Adrenal gland (tissue), 19 donors: ENCODE measurements at regions of chr14 and their contacts with region 1.

Region 1: GRCh38 chr14:53055003-53055402 is 98.1 kb downstream of the DDHD1 start:
- DNase-seq: no peak
- H3K4me3 ChIP-seq: no peak overlapping the region
- H3K27ac ChIP-seq: no peak overlapping the region
- H3K4me1 ChIP-seq: no peaks in the 10 kb centered on the region
- H3K27me3 ChIP-seq: no peaks in the 10 kb centered on the region
- CTCF ChIP-seq: peak; percentile 45 to 80 (median 68)
- POLR2A ChIP-seq: no peak

Region 2: DNA sequence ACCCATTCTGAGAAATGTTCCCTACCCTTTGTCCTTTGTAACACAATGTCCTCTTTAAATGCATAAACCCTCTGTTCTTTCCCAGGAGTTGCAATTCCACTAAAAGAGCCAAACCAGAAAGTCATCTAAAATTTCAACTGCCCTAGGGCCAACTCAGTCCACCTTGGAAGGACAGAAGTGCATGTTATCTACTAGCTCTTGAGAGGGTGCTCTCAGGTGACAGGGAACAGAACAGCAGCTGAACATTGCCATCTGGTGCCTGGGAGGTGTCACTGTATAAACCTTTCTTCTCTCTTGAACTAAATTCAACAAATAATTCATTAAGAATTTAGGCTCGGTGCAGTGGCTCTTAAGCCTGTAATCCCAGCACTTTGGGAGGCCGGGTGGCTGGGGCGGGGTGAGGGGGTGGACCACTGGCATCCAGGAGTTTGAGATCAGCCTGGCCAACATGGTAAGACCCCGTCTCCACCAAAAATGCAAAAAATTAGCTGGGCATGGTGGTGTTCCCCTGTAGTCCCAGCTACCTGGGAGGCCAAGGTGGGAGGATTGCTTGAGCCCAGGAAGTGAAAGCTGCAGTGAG is 93.9 kb before region 1 on chr14:
- intact Hi-C with region 1: loop called in 1 of 2 experiments (anchors 10 kb)
- DNase-seq: peak; percentile 44 to 86 (median 65)
- H3K4me3 ChIP-seq: no peak overlapping the region
- H3K27ac ChIP-seq: peak overlapping the region in 1 of 5 donors; percentile 42
- H3K4me1 ChIP-seq: no peaks in the 10 kb centered on the region
- H3K27me3 ChIP-seq: no peaks in the 10 kb centered on the region
- CTCF ChIP-seq: peak; percentile 43 to 86 (median 77)
- POLR2A ChIP-seq: no peak